ENCODE measurements at regions of chr19 and their contacts with region 1.

Region 1: DNA sequence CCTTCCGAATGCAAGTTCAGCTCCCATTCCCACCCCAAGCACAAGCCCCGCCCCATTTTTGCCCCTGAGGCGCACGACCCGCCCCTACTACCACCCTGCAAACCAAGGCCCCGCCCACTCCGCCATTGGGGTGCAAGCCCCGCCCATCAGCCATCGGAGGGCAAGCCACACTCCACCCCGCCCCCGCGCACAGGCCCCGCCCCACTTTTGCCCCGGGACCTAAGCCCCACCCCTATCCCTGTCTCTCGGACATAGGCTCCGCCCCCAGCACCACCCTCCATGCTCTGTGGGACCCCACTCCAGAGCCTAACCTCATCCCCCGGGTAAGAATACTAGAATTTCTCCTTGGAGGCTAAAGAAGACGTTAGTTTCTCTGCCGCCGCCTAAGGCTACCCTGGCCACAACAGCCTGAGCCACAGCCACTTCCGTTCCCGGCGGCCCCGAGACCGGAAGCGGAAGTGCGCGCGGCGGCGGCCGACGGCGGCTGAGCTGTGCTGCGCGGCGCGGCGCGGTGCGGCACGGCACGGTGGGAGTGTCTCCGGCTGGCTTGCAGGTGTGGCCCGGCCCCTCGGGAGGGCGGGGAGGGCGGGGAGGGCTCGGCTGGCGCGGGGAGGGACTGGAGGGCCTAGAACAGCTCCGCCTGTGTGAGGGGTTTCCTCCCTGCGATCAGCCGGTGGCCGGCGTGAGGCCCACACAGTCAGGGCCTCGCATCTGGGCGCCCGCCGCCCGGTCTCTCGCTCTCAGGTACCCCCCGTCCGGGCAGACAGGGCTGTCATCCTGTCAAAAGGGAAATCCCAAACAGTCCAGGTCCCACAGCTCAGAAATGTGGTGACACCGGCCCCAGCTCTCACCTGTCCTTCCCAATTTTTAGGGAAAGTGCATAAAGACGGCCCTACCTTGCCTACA is at the start of gene ZNF333:
- DNase-seq: peak; percentile 92 to 98 (median 96)
- H3K4me3 ChIP-seq: peak within 1 kb of the TSS in 3 of 4 donors; percentile 35 to 79 (median 56)
- H3K27ac ChIP-seq: peak within 1 kb of the TSS; percentile 73 to 100 (median 94)
- H3K4me1 ChIP-seq: peaks cover 0 to 17% of the 10 kb centered on the region in 2 donors
- H3K27me3 ChIP-seq: no peaks in the 10 kb centered on the region
- CTCF ChIP-seq: peak in 1 of 6 experiments; percentile 8
- POLR2A ChIP-seq: peak; percentile 48 to 67
- total RNA-seq, gene ZNF333: 13.4 to 26.1 (median 19.5) TPM

Region 2: DNA sequence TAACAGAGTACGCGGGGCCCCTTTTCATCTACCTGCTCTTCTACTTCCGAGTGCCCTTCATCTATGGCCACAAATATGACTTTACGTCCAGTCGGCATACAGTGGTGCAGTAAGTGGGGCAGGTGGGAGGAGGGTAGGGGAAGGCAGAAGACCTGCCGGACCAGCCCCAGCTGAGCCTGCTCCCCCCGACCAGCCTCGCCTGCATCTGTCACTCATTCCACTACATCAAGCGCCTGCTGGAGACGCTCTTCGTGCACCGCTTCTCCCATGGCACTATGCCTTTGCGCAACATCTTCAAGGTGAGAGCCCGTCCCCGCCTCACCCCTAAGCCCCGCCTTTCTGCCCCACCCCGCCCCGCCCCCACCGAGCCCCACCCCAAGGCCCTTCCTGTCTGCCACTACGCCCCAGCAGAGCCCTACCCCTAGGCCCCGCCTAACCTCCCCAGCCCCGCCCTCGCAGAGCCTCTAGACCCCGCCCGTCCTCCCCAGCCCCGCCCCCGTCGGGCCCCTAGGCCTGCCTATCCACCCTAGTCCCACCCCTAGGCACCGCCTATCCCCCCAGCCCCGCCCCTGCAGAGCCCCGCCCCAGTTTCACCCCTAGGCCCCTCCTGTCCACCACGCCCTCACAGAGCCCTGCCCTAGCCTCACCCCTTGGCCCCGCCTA is 125.7 kb before region 1 on chr19:
- intact Hi-C with region 1: loop called in 1 of 2 experiments (anchors 10 kb)
- DNase-seq: peak in 2 of 7 donors; percentile 48 to 60
- H3K4me3 ChIP-seq: no peak overlapping the region
- H3K27ac ChIP-seq: peak overlapping the region in 1 of 5 donors; percentile 16
- H3K4me1 ChIP-seq: peaks cover 20 to 30% of the 10 kb centered on the region in 2 donors
- H3K27me3 ChIP-seq: no peaks in the 10 kb centered on the region
- CTCF ChIP-seq: no peak
- POLR2A ChIP-seq: no peak

Region 3: GRCh38 chr19:14571695-14572490 is 118.0 kb before region 1 on chr19 and contains the start of gene NDUFB7:
- intact Hi-C with region 1: loop called (anchors 5 to 10 kb)
- DNase-seq: peak; percentile 86 to 95 (median 92)
- H3K4me3 ChIP-seq: peak within 1 kb of the TSS; percentile 88 to 98 (median 96)
- H3K27ac ChIP-seq: peak within 1 kb of the TSS in 4 of 5 donors; percentile 32 to 80 (median 66)
- H3K4me1 ChIP-seq: peaks cover 9 to 20% of the 10 kb centered on the region in 2 donors
- H3K27me3 ChIP-seq: no peaks in the 10 kb centered on the region
- CTCF ChIP-seq: peak; percentile 58 to 67 (median 65)
- POLR2A ChIP-seq: peak in 1 of 2 donors; percentile 49
- total RNA-seq, gene NDUFB7: 170 to 658 (median 357) TPM

Region 4: DNA sequence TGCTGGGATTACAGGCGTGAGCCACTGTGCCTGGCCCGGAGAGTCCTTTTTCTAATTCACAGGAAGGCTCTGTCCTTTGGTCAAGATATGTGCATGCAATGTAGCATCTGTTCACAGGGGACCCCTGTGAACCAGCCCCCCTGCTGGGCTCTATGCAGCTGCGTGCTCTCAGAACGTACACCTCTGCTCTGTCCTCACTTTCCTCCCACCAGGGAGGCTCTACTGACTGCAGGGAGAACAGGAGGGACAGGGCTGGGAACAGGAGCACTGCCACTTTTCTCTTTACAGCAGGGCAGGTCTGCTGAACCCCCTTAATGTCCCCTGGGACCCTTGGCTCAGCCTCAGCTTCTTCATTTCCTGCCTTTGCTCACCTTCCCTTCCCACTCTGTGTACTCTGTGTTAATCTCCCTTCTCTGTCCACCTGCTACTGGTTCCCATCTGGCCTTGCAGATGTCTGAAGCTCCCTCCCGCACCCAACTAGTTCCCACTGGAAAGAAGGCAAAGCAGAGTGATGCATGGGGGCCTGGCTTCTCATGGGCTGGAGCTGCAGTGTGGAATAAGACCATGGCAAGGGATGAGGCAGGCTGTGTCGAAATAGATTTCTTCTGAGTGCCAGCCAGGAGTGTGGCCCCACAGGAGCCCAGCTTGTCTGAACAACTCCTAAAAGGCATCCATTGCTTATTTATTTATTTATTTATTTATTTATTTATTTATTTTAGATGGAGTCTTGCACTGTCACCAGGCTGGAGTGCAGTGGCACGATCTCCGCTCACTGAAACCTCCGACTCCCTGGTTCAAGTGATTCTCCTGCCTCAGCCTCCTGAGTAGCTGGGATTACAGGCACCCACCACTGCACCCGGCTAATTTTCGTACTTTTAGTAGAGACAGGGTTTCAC is 81.3 kb after region 1 on chr19:
- intact Hi-C with region 1: no loop called
- DNase-seq: no peak
- H3K4me3 ChIP-seq: no peak overlapping the region
- H3K27ac ChIP-seq: no peak overlapping the region
- H3K4me1 ChIP-seq: no peaks in the 10 kb centered on the region
- H3K27me3 ChIP-seq: no peaks in the 10 kb centered on the region
- CTCF ChIP-seq: no peak
- POLR2A ChIP-seq: no peak

Measured in adrenal gland (tissue), 19 donors.